ENCODE measurements at regions of chr1 and their contacts with region 1.

Region 1: GRCh38 chr1:2314803-2315673 is 76.3 kb downstream of the MORN1 start:
- DNase-seq: no peak
- H3K4me3 ChIP-seq: peak overlapping the region; percentile 47
- H3K27me3 ChIP-seq: no peaks in the 10 kb centered on the region
- CTCF ChIP-seq: peak; percentile 66

Region 2: DNA sequence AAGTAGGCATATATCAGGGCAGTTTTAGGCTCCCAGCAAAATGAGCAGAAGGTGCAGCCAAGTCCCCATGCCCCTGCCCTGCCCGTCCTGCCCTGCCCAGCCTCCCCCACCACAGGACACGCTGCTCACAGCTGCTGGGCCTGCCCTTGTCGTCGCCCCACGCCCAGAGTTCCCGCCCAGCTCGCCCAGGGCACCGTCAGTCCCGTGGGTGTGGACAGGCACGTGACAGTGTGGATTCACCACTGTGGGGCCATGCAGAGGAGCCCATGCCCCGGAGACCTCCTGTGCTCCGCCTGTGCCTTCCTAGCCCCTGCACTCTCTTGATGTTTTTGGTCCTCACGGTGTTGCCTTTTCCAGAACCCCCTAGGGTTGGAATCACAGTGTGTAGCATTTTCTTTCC is 127.4 kb before region 1 on chr1:
- CTCF ChIA-PET with region 1: no interaction called
- POLR2A ChIA-PET with region 1: no interaction called
- DNase-seq: no peak
- H3K4me3 ChIP-seq: no peak overlapping the region
- H3K27me3 ChIP-seq: no peaks in the 10 kb centered on the region
- CTCF ChIP-seq: no peak

Region 3: DNA sequence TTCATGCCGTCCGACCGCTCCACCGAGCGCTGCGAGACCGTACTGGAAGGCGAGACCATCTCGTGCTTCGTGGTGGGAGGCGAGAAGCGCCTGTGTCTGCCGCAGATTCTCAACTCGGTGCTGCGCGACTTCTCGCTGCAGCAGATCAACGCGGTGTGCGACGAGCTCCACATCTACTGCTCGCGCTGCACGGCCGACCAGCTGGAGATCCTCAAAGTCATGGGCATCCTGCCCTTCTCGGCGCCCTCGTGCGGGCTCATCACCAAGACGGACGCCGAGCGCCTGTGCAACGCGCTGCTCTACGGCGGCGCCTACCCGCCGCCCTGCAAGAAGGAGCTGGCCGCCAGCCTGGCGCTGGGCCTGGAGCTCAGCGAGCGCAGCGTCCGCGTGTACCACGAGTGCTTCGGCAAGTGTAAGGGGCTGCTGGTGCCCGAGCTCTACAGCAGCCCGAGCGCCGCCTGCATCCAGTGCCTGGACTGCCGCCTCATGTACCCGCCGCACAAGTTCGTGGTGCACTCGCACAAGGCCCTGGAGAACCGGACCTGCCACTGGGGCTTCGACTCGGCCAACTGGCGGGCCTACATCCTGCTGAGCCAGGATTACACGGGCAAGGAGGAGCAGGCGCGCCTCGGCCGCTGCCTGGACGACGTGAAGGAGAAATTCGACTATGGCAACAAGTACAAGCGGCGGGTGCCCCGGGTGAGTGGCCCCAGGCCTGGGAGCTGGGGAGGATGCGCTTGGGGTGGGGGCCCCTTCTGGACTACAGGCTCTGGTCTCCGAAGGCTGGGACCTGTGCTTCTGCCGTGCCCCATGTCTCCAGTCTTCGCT is 85.8 kb before region 1 on chr1:
- CTCF ChIA-PET with region 1: interaction called, 14 read pairs
- POLR2A ChIA-PET with region 1: no interaction called
- DNase-seq: no peak
- H3K4me3 ChIP-seq: peak overlapping the region; percentile 80
- H3K27me3 ChIP-seq: no peaks in the 10 kb centered on the region
- CTCF ChIP-seq: no peak

Region 4: GRCh38 chr1:2330511-2331199 is 15.6 kb after region 1 on chr1:
- CTCF ChIA-PET with region 1: interaction called, 14 read pairs
- POLR2A ChIA-PET with region 1: no interaction called
- DNase-seq: peak; percentile 74
- H3K4me3 ChIP-seq: no peak overlapping the region
- H3K27me3 ChIP-seq: no peaks in the 10 kb centered on the region
- CTCF ChIP-seq: peak; percentile 35

Region 5: DNA sequence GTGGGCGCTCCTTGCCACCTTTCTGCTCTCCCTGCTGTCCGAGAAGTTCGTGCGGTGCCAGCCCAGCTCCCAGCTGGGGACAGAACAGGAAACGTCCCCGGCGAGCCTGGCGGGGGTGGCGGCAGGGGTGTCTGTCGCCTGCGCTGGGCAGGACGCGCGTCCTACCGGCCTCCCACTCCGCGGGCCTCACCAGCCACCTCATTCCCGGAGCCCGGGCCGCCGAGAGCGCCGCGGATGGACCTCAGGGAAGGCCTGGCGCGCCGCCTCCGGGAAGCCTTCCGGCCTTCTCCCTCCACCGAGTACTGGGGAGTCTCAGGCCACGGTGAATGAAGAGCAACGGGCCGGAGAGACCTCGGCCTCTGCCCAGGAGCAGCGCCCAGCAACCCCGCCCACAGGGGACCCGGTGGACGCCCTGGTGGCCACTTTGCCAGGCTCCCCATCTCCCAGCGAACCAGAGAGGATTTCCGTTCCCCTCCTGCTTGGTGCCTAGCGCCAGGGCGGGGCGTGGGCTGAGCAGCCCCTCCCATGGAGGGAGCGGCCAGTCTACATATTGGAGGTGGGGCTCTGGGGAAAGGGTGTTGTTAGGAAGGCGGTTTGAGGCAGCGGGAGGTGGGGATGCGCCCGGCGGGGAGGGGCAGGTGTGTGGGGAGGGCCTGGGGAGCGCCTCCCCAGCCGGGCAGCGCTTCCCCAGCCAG is 231.6 kb after region 1 on chr1:
- CTCF ChIA-PET with region 1: no interaction called
- POLR2A ChIA-PET with region 1: no interaction called
- DNase-seq: no peak
- H3K4me3 ChIP-seq: peak overlapping the region; percentile 55
- H3K27me3 ChIP-seq: no peaks in the 10 kb centered on the region
- CTCF ChIP-seq: peak; percentile 30; the same call in 1 of the 2 replicates

Measured in BJ (cell line).